Caco-2 (cell line): ENCODE measurements at regions of chr2 and their contacts with region 1.

Region 1: DNA sequence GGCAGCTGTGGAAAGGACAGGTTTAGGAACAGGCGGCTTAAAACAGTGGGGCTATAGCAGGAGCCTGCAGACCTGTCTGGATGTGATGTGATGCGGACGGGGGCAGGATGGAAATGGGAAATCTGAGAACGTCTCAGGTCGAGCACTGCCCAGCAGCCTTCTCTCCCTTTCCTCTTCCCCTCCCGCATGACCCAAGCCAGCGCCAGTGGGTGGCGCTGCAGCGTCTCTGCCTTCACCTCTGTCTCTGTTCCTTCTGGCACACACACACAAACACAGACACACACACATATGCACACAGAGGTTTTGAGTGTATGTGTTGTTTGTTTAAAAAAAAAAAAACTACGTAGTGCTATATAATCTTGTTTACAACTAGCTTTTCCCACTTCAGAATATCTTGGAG is 82.0 kb upstream of the SLC66A3 start:
- DNase-seq: peak in 1 of 2 experiments; percentile 42
- H3K4me3 ChIP-seq: no peak overlapping the region
- H3K4me3 Mint-ChIP-seq: no peak overlapping the region
- H3K27ac Mint-ChIP-seq: no peak overlapping the region
- H3K4me1 ChIP-seq: no peaks in the 10 kb centered on the region
- H3K4me1 Mint-ChIP-seq: no peaks in the 10 kb centered on the region
- H3K27me3 ChIP-seq: no peaks in the 10 kb centered on the region
- H3K27me3 Mint-ChIP-seq: peaks cover 7% of the 10 kb centered on the region
- CTCF ChIP-seq: peak; percentile 27 to 44

Region 2: DNA sequence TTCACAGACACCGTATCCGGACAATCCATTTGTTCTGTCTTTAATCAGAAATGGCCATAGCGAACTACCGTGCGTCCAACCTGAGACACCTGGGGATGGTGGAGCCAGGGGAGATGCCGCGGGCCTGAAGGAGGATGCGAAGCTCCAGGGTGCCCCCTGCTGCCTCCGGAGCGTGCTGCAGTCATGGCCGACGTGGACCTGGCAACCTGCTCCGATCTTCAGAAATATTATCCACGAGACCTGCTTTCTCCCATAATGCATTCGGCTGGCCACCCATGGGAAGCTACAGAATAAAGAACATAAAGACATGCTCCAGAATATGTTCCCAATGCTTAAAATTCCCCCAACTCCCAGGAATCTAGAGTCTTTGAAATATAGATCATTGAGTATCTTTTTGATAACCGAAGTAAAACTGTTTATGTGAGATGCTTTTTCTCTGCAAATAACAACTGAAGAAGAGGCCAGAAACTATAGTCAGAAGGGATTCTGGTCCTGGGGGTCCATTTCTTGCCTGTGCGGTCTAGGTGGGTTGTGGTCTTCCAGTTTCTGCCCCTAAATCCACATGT is 51.3 kb after region 1 on chr2:
- CTCF ChIA-PET with region 1: interaction called, 3 read pairs
- POLR2A ChIA-PET with region 1: no interaction called
- intact Hi-C with region 1: loop called (anchors 2 kb)
- DNase-seq: peak; percentile 76 to 88
- H3K4me3 ChIP-seq: no peak overlapping the region
- H3K4me3 Mint-ChIP-seq: no peak overlapping the region
- H3K27ac Mint-ChIP-seq: no peak overlapping the region
- H3K4me1 ChIP-seq: peaks cover 3% of the 10 kb centered on the region; the same call in 1 of the 2 replicates
- H3K4me1 Mint-ChIP-seq: peaks cover 7% of the 10 kb centered on the region
- H3K27me3 ChIP-seq: no peaks in the 10 kb centered on the region
- H3K27me3 Mint-ChIP-seq: no peaks in the 10 kb centered on the region
- CTCF ChIP-seq: peak; percentile 88 to 89